ENCODE measurements at regions of chr12 and their contacts with region 1.

Region 1: DNA sequence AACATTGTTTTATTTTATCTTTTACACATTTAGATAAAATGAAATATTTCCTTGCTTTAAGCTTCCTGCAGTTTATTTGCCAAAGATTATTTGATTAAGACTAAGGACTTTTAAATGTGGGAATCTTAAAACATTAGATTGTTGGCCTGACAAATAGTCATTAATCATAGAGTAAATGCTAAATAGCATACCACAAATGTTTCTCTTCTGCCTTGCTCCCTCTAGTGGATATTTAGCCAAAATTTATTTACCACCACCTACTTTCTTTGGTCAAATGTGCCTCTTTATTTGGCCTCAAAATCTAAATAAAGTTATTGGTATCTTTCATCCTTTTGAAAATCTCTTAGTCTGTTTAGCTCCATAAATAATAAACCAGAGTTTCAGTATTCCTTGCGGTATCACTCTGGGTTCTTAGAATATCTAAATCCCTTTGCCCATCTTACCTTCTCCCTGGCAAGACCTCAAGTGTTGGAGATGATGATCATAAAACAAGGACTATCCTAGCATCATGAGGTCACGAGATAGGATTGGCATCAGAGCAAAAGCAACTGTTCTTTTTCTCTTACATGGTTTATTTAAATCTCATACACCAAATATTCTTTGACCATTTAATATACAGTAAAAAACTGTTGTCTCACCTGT is 150.6 kb upstream of the AEBP2 start:
- DNase-seq: peak in 4 of 5 donors; percentile 14 to 19 (median 16)
- H3K4me3 ChIP-seq: no peak overlapping the region
- H3K4me3 Mint-ChIP-seq: no peak overlapping the region
- H3K27ac ChIP-seq: no peak overlapping the region
- H3K27ac Mint-ChIP-seq: no peak overlapping the region
- H3K4me1 ChIP-seq: no peaks in the 10 kb centered on the region
- H3K4me1 Mint-ChIP-seq: no peaks in the 10 kb centered on the region
- H3K27me3 ChIP-seq: no peaks in the 10 kb centered on the region
- H3K27me3 Mint-ChIP-seq: no peaks in the 10 kb centered on the region

Region 2: GRCh38 chr12:18250313-18250916 is 1038.3 kb before region 1 on chr12:
- CTCF ChIA-PET with region 1: no interaction called
- POLR2A ChIA-PET with region 1: no interaction called
- intact Hi-C with region 1: loop called (anchors 5 kb)
- DNase-seq: no peak
- H3K4me3 ChIP-seq: no peak overlapping the region
- H3K4me3 Mint-ChIP-seq: no peak overlapping the region
- H3K27ac ChIP-seq: no peak overlapping the region
- H3K27ac Mint-ChIP-seq: no peak overlapping the region
- H3K4me1 ChIP-seq: no peaks in the 10 kb centered on the region
- H3K4me1 Mint-ChIP-seq: no peaks in the 10 kb centered on the region
- H3K27me3 ChIP-seq: no peaks in the 10 kb centered on the region
- H3K27me3 Mint-ChIP-seq: no peaks in the 10 kb centered on the region

Region 3: DNA sequence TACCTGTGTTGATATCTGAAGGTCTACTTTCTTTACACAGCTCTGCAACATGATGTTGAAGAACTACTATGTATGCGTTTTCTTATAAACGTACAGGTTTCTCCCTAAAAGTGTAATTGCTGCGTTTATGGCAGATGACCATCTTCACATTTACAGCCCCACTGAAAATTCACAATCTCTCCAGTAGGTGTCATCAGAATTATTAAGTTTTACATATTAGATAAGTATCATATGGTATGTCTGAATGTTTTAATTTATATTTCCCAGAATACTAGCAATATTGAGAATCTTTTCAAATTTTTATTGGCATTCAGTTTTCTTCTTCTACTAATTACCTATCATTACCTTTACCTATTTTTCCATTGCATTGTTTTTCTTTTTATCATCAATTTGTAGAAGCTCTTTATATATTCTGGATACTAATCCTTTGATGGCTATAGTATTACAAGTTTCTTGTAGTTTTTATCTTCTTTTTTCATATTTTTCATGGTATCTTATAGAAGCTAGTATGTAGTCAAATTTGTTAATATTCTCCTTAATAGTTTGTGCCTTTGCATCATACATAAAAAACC is 427.4 kb before region 1 on chr12:
- CTCF ChIA-PET with region 1: interaction called, 3 read pairs
- POLR2A ChIA-PET with region 1: no interaction called
- intact Hi-C with region 1: loop called (anchors 1 kb)
- DNase-seq: peak in 2 of 5 donors; percentile 4 to 10
- H3K4me3 ChIP-seq: no peak overlapping the region
- H3K4me3 Mint-ChIP-seq: no peak overlapping the region
- H3K27ac ChIP-seq: no peak overlapping the region
- H3K27ac Mint-ChIP-seq: no peak overlapping the region
- H3K4me1 ChIP-seq: no peaks in the 10 kb centered on the region
- H3K4me1 Mint-ChIP-seq: no peaks in the 10 kb centered on the region
- H3K27me3 ChIP-seq: no peaks in the 10 kb centered on the region
- H3K27me3 Mint-ChIP-seq: peaks cover 2 to 4% of the 10 kb centered on the region in 2 donors

Region 4: DNA sequence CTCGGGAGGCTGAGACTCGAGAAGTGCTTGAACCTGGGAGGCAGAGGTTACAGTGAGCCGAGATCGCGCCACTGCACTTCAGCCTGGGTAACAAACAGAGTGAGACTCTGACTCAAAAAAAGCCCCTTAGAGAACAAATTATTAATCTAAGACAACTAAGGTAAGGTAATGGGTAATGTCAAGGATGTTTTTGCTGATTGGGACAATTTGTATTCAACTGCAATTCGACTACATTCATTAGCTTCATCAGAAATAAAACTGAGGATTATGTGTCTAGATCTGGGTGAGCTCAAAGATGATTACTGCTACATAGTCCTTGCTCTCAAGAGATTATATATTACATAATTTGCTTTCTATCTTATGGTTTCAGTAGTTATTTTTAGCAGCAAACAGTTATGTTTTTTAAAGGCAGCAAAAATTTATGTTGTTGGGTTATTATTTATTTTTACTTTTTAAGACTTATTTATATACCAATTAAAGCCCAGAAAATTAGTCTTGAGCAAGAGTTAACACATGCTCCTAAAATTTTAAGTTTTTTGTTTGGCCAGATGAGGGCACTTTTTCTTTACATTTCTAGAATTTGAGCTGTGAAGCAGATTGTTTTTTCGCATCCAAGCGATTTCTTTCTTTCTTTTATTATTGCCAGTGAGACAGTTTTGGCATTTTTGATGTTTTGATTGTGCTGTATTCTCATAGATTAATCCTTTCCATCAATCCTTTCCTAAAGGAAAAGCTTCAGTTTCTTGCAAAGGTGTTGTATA is 106.9 kb before region 1 on chr12:
- CTCF ChIA-PET with region 1: interaction called, 8 read pairs
- POLR2A ChIA-PET with region 1: no interaction called
- intact Hi-C with region 1: loop called (anchors 1 kb)
- DNase-seq: no peak
- H3K4me3 ChIP-seq: no peak overlapping the region
- H3K4me3 Mint-ChIP-seq: no peak overlapping the region
- H3K27ac ChIP-seq: no peak overlapping the region
- H3K27ac Mint-ChIP-seq: no peak overlapping the region
- H3K4me1 ChIP-seq: no peaks in the 10 kb centered on the region
- H3K4me1 Mint-ChIP-seq: no peaks in the 10 kb centered on the region
- H3K27me3 ChIP-seq: no peaks in the 10 kb centered on the region
- H3K27me3 Mint-ChIP-seq: no peaks in the 10 kb centered on the region

Region 5: GRCh38 chr12:19273482-19274330 is 15.0 kb before region 1 on chr12:
- CTCF ChIA-PET with region 1: interaction called, 22 read pairs
- POLR2A ChIA-PET with region 1: interaction called, 3 read pairs
- intact Hi-C with region 1: no loop called
- DNase-seq: peak; percentile 62 to 87 (median 74)
- H3K4me3 ChIP-seq: no peak overlapping the region
- H3K4me3 Mint-ChIP-seq: peak overlapping the region in 6 of 8 donors; percentile 10 to 79 (median 52)
- H3K27ac ChIP-seq: no peak overlapping the region
- H3K27ac Mint-ChIP-seq: peak overlapping the region; percentile 76 to 89 (median 81)
- H3K4me1 ChIP-seq: peaks cover 20% of the 10 kb centered on the region
- H3K4me1 Mint-ChIP-seq: peaks cover 15 to 29% (median 21%) of the 10 kb centered on the region in 4 donors
- H3K27me3 ChIP-seq: no peaks in the 10 kb centered on the region
- H3K27me3 Mint-ChIP-seq: peaks cover 0 to 2% of the 10 kb centered on the region in 2 donors

Measured in CD4-positive, alpha-beta memory T cell (primary cell).